HEK293T (cell line): ENCODE measurements at regions of chr22 and their contacts with region 1.

Region 1: GRCh38 chr22:39514373-39514973 is 5.9 kb upstream of the ATF4 start:
- DNase-seq: peak; percentile 47

Region 2: GRCh38 chr22:39388261-39389011 is 126.0 kb before region 1 on chr22:
- CTCF ChIA-PET with region 1: no interaction called
- POLR2A ChIA-PET with region 1: no interaction called
- DNase-seq: peak; percentile 100

Region 3: GRCh38 chr22:39496131-39496838 is 18.2 kb before region 1 on chr22:
- CTCF ChIA-PET with region 1: interaction called, 13 read pairs
- POLR2A ChIA-PET with region 1: interaction called, 94 read pairs
- DNase-seq: peak; percentile 81

Region 4: DNA sequence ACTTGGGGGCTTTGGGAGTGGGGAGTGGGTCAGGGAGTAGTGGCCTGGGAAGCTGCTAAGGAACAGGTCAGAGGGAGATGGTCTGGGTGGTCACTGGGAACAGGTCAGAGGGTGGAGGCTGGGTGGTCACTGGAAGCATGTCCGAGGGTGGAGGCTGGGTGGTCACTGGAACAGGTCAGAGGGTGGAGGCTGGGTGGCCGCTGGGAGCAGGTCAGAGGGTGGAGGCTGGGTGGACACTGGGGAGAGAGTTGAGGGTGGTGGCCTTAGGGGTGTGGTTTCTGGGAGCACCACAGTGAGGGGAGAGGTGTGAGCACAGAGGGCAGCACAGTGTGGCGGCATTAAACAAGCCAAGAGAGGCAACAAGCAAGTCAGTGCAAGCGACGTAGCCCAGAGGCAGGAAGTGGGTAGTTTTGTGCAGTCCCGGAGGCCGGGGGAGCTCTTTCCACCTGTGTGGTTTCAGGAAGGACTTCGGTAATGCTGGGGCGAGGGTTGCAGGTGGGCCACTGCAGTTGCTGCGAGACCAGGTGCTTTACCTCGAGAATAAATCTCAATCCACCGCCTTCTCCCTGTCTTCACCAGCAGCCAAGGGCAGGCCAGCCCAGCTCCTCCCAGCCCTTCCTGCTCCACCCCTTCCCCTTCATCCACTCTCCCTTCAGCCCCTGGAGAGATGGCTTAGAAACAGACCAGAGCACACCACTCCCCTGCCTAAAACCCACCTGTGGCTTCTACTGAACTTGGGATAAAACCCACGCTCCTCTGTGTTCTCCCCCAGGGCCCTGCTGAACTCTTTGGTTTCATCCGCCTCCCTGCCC is 52.9 kb after region 1 on chr22:
- CTCF ChIA-PET with region 1: no interaction called
- POLR2A ChIA-PET with region 1: no interaction called
- DNase-seq: no peak

Region 5: DNA sequence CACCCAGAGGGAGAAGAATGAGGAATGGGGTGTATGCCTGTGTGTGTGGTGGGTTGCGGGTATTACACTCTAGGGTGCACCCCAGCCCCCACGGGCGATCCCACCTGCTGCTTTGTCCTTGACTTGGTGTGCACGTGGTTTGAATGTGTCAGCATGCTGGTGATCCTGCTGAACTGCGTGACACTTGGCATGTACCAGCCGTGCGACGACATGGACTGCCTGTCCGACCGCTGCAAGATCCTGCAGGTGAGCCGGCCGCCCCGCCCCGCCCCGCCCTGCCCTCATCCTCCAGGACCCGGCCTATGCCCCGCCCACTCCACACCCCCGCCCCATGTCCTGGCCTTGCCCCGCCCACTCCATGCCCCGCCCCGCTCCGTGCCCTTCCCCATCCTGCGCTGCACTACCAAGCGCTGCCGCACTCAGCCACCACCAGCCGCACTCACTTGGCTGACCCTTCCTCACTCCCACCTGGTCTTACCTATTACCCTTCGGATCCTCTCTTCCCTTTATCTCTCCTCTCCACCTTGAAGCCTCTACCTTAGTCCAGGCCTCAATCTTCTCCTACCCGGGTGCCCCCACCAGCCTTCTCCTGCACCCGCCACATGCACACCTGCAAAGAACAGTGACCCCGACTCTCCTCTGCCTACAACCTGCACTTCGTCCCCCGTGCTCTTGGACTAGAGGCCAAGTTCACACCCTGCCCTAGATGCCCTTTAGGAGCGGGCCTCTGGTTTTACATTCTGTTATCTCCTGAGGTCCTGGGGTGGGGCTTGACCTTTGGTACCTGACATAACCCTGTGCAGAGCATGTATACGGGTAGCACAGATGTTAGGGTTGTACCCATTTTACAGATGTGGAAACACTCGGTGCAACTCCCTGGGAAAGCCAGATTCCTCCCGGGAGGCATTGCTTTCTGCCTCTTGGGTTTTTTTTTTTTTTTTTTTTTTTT is 83.8 kb after region 1 on chr22:
- CTCF ChIA-PET with region 1: no interaction called
- POLR2A ChIA-PET with region 1: no interaction called
- DNase-seq: peak; percentile 79

Region 6: DNA sequence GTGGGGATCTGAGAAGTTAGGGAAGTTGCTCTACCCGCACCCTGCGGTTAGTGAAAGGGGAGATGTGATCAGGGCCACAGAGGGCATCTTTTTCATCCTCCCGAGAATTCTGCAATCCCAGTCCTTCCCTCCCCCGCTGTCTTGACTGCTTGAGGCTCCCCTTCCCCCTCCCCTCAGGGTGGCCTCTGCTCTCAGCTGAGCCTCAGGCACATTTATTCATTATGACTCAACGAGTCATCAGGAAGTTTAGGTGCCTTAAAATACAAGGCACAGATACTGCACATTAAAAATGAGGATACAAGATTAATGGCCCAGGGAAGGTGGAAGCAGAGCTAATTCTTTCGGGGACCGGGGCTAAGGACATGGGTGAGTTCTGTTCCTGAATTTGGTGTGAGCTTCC is 160.1 kb after region 1 on chr22:
- CTCF ChIA-PET with region 1: no interaction called
- POLR2A ChIA-PET with region 1: no interaction called
- DNase-seq: no peak